Activated CD8-positive, alpha-beta T cell treated with anti-CD3 and anti-CD28 coated beads, Interleukin-2, amount 10 ng/mL, durations not matched to agents 7 days and 5 days (primary cell): ENCODE measurements at regions of chr2 and their contacts with region 1.

Region 1: GRCh38 chr2:157492189-157492773 is 48.4 kb upstream of the CYTIP start:
- DNase-seq: peak; percentile 85
- ATAC-seq: peak; percentile 85
- H3K4me3 Mint-ChIP-seq: no peak overlapping the region
- H3K27ac Mint-ChIP-seq: no peak overlapping the region
- H3K4me1 Mint-ChIP-seq: peaks cover 66% of the 10 kb centered on the region
- H3K27me3 Mint-ChIP-seq: no peaks in the 10 kb centered on the region

Region 2: DNA sequence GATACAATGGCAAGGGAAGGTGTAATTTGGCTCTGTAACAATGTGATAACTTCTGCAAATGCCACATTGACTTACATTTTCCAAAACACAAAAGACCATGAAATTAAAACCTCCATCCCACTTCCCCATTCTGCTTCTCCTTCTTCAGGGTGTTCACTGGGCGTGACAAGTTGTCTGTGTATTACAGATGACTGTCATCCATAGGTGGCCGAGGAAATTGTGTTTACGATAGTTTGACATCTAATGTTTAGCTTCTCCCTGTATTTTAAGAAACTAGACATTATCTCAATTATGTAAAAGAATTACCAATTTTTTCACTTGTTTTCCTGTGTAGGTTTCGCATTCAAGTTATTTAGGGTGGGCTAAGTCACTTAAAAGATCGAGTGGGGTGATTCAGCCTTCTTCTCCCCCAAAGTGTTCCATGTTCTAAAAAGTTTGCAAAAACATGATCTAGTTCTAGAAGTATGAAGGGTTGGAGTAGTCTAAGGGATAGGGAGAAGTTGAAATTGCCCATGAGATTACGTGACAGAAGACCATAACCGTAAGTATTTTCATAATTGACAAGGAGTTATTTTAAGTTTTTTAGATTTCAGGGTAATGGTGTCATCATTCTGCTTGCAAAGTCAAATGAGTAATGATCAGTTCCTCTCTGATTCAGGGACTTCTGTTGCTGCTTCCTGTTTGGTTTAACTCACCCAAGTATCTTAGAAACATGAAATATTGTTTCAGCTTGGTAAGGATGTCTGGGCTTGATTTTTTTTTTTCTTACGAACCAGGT is 23.2 kb before region 1 on chr2:
- CTCF ChIA-PET with region 1: interaction called, 17 read pairs
- POLR2A ChIA-PET with region 1: interaction called, 8 read pairs
- DNase-seq: no peak
- ATAC-seq: peak; percentile 76
- H3K4me3 Mint-ChIP-seq: peak overlapping the region; percentile 72
- H3K27ac Mint-ChIP-seq: peak overlapping the region; percentile 99
- H3K4me1 Mint-ChIP-seq: peaks cover 96% of the 10 kb centered on the region
- H3K27me3 Mint-ChIP-seq: no peaks in the 10 kb centered on the region

Region 3: GRCh38 chr2:157480182-157480961 is 11.9 kb before region 1 on chr2:
- CTCF ChIA-PET with region 1: interaction called, 84 read pairs
- POLR2A ChIA-PET with region 1: interaction called, 11 read pairs
- DNase-seq: peak; percentile 57
- ATAC-seq: peak; percentile 32
- H3K4me3 Mint-ChIP-seq: peak overlapping the region; percentile 80
- H3K27ac Mint-ChIP-seq: peak overlapping the region; percentile 98
- H3K4me1 Mint-ChIP-seq: peaks cover 79% of the 10 kb centered on the region
- H3K27me3 Mint-ChIP-seq: no peaks in the 10 kb centered on the region

Region 4: GRCh38 chr2:157509744-157510143 is 17.5 kb after region 1 on chr2:
- CTCF ChIA-PET with region 1: interaction called, 12 read pairs
- POLR2A ChIA-PET with region 1: no interaction called
- DNase-seq: no peak
- ATAC-seq: no peak
- H3K4me3 Mint-ChIP-seq: no peak overlapping the region
- H3K27ac Mint-ChIP-seq: no peak overlapping the region
- H3K4me1 Mint-ChIP-seq: peaks cover 2% of the 10 kb centered on the region
- H3K27me3 Mint-ChIP-seq: peaks cover 20% of the 10 kb centered on the region

Region 5: GRCh38 chr2:157596992-157597681 is 104.9 kb after region 1 on chr2:
- CTCF ChIA-PET with region 1: interaction called, 14 read pairs
- POLR2A ChIA-PET with region 1: no interaction called
- DNase-seq: peak; percentile 69
- ATAC-seq: peak; percentile 82
- H3K4me3 Mint-ChIP-seq: peak overlapping the region; percentile 62
- H3K27ac Mint-ChIP-seq: no peak overlapping the region
- H3K4me1 Mint-ChIP-seq: peaks cover 12% of the 10 kb centered on the region
- H3K27me3 Mint-ChIP-seq: peaks cover 18% of the 10 kb centered on the region

Region 6: DNA sequence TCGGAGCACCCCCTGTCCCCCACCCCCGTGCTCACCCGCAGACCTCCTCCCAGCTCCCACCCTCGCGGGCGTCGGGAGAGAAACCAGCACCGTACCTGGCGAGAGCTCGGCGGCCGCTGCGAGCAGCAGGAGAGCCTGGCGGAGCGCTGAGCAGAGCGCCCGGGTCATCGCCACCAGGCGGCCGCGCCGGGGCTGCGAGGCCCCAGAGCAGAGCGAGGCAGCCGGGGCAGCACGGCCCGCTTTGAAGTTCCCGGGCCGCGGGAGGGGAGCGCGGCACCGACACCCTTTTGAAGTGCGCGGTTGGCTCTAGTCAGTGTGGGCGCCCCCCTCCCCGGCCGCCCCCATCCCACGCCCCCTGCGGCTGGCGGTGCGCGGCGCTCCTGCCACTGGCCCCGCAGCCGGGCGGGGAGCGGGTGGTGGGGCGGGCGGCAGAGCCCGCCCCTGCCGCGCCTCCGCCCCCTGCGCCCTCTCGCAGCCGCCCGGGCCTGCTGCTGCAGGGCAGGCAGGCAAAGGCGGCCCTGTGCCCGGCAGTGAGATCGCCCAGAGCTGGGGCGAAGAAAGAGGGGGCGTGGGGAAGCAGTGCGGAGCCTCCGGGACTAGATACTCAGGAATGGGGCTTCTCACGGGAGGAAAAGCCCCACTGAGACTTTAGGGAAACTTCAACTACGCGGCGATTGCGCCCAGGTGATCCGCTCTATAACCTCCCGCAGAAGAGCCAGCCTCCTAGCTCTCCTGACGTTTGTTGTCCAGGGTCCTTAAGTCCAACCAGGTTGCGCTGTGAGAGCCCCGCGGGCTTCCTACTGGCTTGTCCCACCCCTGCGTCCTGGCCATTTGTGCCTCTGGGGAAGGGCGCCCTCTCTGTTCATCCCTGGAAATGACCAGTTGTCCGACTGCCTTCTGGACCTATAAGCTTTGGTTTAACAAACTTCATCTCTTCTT is 136.5 kb after region 1 on chr2 and contains the start of gene ACVR1C:
- CTCF ChIA-PET with region 1: interaction called, 20 read pairs
- POLR2A ChIA-PET with region 1: no interaction called
- DNase-seq: peak; percentile 75
- ATAC-seq: peak; percentile 95
- H3K4me3 Mint-ChIP-seq: peak within 1 kb of the TSS; percentile 81
- H3K27ac Mint-ChIP-seq: no peak within 1 kb of the TSS
- H3K4me1 Mint-ChIP-seq: peaks cover 26% of the 10 kb centered on the region
- H3K27me3 Mint-ChIP-seq: peaks cover 15% of the 10 kb centered on the region
- total RNA-seq, gene ACVR1C: 0.63 to 0.73 TPM